Activated naive CD4-positive, alpha-beta T cell treated with anti-CD3 and anti-CD28 coated beads for 36 hours (primary cell): ENCODE measurements at regions of chr4 and their contacts with region 1.

Region 1: GRCh38 chr4:37452952-37453280 is 208.4 kb downstream of the NWD2 start:
- DNase-seq: peak; percentile 80
- H3K4me3 Mint-ChIP-seq: peak overlapping the region; percentile 69
- H3K27ac Mint-ChIP-seq: no peak overlapping the region
- H3K4me1 Mint-ChIP-seq: peaks cover 9% of the 10 kb centered on the region
- H3K27me3 Mint-ChIP-seq: peaks cover 43% of the 10 kb centered on the region

Region 2: GRCh38 chr4:37516057-37516775 is 63.3 kb after region 1 on chr4:
- CTCF ChIA-PET with region 1: no interaction called
- intact Hi-C with region 1: no loop called
- DNase-seq: no peak
- H3K4me3 Mint-ChIP-seq: no peak overlapping the region
- H3K27ac Mint-ChIP-seq: no peak overlapping the region
- H3K4me1 Mint-ChIP-seq: no peaks in the 10 kb centered on the region
- H3K27me3 Mint-ChIP-seq: no peaks in the 10 kb centered on the region

Region 3: GRCh38 chr4:37568481-37568880 is 115.6 kb after region 1 on chr4:
- CTCF ChIA-PET with region 1: interaction called, 63 read pairs
- intact Hi-C with region 1: loop called (anchors 1 kb)
- DNase-seq: no peak
- H3K4me3 Mint-ChIP-seq: no peak overlapping the region
- H3K27ac Mint-ChIP-seq: no peak overlapping the region
- H3K4me1 Mint-ChIP-seq: no peaks in the 10 kb centered on the region
- H3K27me3 Mint-ChIP-seq: no peaks in the 10 kb centered on the region

Region 4: DNA sequence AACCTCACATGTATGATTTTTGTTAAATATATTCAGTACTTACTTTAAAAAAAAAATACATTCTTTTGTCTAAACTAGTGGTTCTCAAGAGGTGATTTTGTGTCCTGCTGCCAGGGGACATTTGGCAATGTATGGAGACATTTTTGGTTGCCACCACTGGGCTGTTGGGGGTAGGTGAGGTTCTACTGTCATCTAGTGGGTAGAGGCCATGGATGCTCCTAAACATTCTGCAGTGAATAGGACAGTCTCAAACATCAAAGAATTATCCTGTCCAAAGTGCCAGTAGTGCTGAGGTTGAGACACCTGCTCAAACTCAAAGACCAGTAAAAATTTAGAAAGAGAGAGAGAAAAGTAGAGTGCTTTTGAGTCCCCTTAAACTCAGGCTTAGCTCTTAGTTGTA is 340.6 kb after region 1 on chr4:
- CTCF ChIA-PET with region 1: no interaction called
- intact Hi-C with region 1: loop called (anchors 1 kb)
- DNase-seq: peak; percentile 22
- H3K4me3 Mint-ChIP-seq: no peak overlapping the region
- H3K27ac Mint-ChIP-seq: no peak overlapping the region
- H3K4me1 Mint-ChIP-seq: no peaks in the 10 kb centered on the region
- H3K27me3 Mint-ChIP-seq: no peaks in the 10 kb centered on the region

Region 5: GRCh38 chr4:37837446-37837845 is 384.5 kb after region 1 on chr4:
- CTCF ChIA-PET with region 1: no interaction called
- intact Hi-C with region 1: no loop called
- DNase-seq: no peak
- H3K4me3 Mint-ChIP-seq: no peak overlapping the region
- H3K27ac Mint-ChIP-seq: peak overlapping the region; percentile 3
- H3K4me1 Mint-ChIP-seq: peaks cover 24% of the 10 kb centered on the region
- H3K27me3 Mint-ChIP-seq: no peaks in the 10 kb centered on the region

Region 6: GRCh38 chr4:37977471-37978247 is 524.7 kb after region 1 on chr4:
- CTCF ChIA-PET with region 1: no interaction called
- intact Hi-C with region 1: loop called (anchors 1 kb)
- DNase-seq: peak; percentile 83
- H3K4me3 Mint-ChIP-seq: peak overlapping the region; percentile 77
- H3K27ac Mint-ChIP-seq: peak overlapping the region; percentile 26
- H3K4me1 Mint-ChIP-seq: peaks cover 27% of the 10 kb centered on the region
- H3K27me3 Mint-ChIP-seq: no peaks in the 10 kb centered on the region